Ovary (tissue), 10 donors: ENCODE measurements at regions of chr19 and their contacts with region 1.

Region 1: DNA sequence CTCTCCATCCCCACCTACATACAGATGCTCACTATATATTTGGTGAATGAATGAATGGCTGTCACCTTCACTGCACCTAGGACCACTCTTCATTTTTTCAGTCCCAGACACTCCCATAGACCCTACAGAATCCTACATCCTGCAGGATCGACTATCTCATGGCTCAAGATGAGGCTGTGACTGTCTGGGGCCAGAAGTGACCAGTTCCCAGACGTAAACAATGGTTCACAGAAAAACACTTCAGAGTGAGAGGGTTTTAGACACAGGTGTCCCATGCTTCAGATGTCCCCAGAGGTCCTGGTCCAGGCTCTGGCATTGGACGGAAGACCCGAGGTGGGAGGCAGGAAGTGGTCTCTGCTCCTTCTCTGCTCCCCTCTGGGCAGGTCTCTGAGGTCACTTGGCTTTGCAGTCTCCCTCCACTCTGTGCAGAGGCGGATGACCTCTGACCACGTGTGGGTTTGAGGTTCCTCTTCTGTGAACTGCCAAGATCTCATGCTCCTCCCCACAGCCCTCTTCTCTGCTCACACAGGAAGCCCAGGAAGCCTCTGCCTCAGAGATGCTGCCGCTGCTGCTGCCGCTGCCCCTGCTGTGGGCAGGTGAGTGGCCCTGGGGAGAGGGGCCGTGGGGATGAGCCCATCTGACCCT is 24.9 kb downstream of the SIGLEC7 start:
- DNase-seq: no peak
- H3K4me3 ChIP-seq: no peak overlapping the region
- H3K27ac ChIP-seq: no peak overlapping the region
- H3K4me1 ChIP-seq: peaks cover 9% of the 10 kb centered on the region
- H3K27me3 ChIP-seq: no peaks in the 10 kb centered on the region
- CTCF ChIP-seq: no peak
- EP300 ChIP-seq: no peak
- POLR2A ChIP-seq: no peak

Region 2: GRCh38 chr19:51108066-51108804 is 58.7 kb before region 1 on chr19 and contains the start of gene CTU1:
- intact Hi-C with region 1: loop called in 1 of 4 experiments (anchors 10 kb)
- DNase-seq: peak; percentile 97 to 98 (median 98)
- H3K4me3 ChIP-seq: peak within 1 kb of the TSS; percentile 89
- H3K27ac ChIP-seq: peak within 1 kb of the TSS; percentile 8 to 32
- H3K4me1 ChIP-seq: peaks cover 5% of the 10 kb centered on the region
- H3K27me3 ChIP-seq: no peaks in the 10 kb centered on the region
- CTCF ChIP-seq: peak in 2 of 3 donors; percentile 39 to 53
- EP300 ChIP-seq: no peak
- POLR2A ChIP-seq: peak; percentile 42
- total RNA-seq, gene CTU1: 10.0 to 17.2 (median 13.2) TPM